ENCODE measurements at regions of chr2 and their contacts with region 1.

Region 1: GRCh38 chr2:100262555-100263320 is 59.6 kb downstream of the LONRF2 start:
- DNase-seq: peak; percentile 83 to 85
- H3K4me3 ChIP-seq: no peak overlapping the region
- H3K27ac ChIP-seq: peak overlapping the region in 1 of 2 donors; percentile 55
- H3K4me1 ChIP-seq: peaks cover 0 to under 1% of the 10 kb centered on the region in 2 donors
- H3K27me3 ChIP-seq: no peaks in the 10 kb centered on the region
- CTCF ChIP-seq: peak; percentile 91 to 98 (median 95)
- POLR2A ChIP-seq: peak in 1 of 2 donors; percentile 15

Region 2: GRCh38 chr2:100178051-100178788 is 84.5 kb before region 1 on chr2:
- intact Hi-C with region 1: no loop called
- DNase-seq: no peak
- H3K4me3 ChIP-seq: no peak overlapping the region
- H3K27ac ChIP-seq: no peak overlapping the region
- H3K4me1 ChIP-seq: no peaks in the 10 kb centered on the region
- H3K27me3 ChIP-seq: no peaks in the 10 kb centered on the region
- CTCF ChIP-seq: no peak
- POLR2A ChIP-seq: no peak

Region 3: DNA sequence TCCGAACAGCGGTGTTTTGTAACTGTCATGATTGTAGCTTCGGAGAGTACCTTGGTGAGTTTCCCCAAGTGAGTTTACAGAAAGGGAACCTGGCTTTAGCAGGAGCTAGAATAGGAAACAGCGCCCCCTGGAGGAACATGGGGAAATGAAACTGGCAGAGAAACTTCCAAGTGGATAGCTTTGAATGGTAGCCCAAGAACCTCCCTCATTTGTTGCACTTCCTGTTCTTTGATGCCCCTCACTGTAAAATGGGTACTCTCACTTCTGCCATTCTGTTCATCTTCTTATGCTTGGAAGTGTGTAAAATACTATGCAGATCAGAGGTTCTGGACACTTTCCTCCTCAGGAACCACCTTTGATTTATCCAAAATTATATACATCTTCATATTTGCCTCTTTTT is 118.5 kb after region 1 on chr2:
- intact Hi-C with region 1: loop called (anchors 2 kb)
- DNase-seq: peak; percentile 85 to 90
- H3K4me3 ChIP-seq: no peak overlapping the region
- H3K27ac ChIP-seq: peak overlapping the region; percentile 26 to 54
- H3K4me1 ChIP-seq: no peaks in the 10 kb centered on the region
- H3K27me3 ChIP-seq: no peaks in the 10 kb centered on the region
- CTCF ChIP-seq: peak; percentile 85 to 93 (median 88)
- POLR2A ChIP-seq: no peak

Measured in uterus (tissue), 4 donors.